H1 (cell line): ENCODE measurements at regions of chr9 and their contacts with region 1.

Region 1: GRCh38 chr9:4197548-4197947 is 102.3 kb downstream of the GLIS3 start:
- DNase-seq: peak in 1 of 2 experiments; percentile 49
- H3K4me3 ChIP-seq: no peak overlapping the region
- H3K27ac ChIP-seq: no peak overlapping the region
- H3K4me1 ChIP-seq: no peaks in the 10 kb centered on the region
- H3K27me3 ChIP-seq: no peaks in the 10 kb centered on the region
- CTCF ChIP-seq: peak; percentile 71 to 87 (median 77)
- EP300 ChIP-seq: no peak
- POLR2A ChIP-seq: no peak
- RAD21 ChIP-seq: peak; percentile 75 to 79

Region 2: DNA sequence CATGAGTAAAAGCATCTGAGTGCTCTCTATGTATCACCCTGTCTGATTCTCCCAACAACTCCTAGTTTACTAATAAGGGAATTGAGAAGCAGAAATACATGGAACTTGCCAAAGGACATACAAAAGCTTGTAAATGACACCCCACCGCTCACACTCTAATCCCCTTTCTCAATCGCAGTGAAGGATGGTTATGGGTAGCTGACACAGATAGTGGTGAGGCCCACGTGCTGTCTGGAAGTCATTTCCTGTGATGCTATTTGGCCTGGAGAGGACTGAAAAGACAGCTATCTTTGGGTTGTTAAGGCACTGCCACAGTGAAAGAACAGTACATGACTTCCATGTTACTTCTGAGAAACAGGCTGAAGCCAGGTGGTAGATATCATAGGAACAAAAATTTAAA is 14.7 kb before region 1 on chr9:
- CTCF ChIA-PET with region 1: interaction called, 10 read pairs
- POLR2A ChIA-PET with region 1: no interaction called
- DNase-seq: no peak
- H3K4me3 ChIP-seq: no peak overlapping the region
- H3K27ac ChIP-seq: no peak overlapping the region
- H3K4me1 ChIP-seq: no peaks in the 10 kb centered on the region
- H3K27me3 ChIP-seq: no peaks in the 10 kb centered on the region
- CTCF ChIP-seq: no peak
- EP300 ChIP-seq: no peak
- POLR2A ChIP-seq: no peak
- RAD21 ChIP-seq: no peak

Region 3: GRCh38 chr9:4228606-4229005 is 31.1 kb after region 1 on chr9:
- CTCF ChIA-PET with region 1: interaction called, 10 read pairs
- POLR2A ChIA-PET with region 1: no interaction called
- DNase-seq: no peak
- H3K4me3 ChIP-seq: no peak overlapping the region
- H3K27ac ChIP-seq: no peak overlapping the region
- H3K4me1 ChIP-seq: no peaks in the 10 kb centered on the region
- H3K27me3 ChIP-seq: no peaks in the 10 kb centered on the region
- CTCF ChIP-seq: peak in 2 of 3 experiments; percentile 13 to 39; a peak in 2 of 4 replicates
- EP300 ChIP-seq: no peak
- POLR2A ChIP-seq: no peak
- RAD21 ChIP-seq: peak; percentile 30 to 34